ENCODE measurements at regions of chr1 and their contacts with region 1.

Region 1: DNA sequence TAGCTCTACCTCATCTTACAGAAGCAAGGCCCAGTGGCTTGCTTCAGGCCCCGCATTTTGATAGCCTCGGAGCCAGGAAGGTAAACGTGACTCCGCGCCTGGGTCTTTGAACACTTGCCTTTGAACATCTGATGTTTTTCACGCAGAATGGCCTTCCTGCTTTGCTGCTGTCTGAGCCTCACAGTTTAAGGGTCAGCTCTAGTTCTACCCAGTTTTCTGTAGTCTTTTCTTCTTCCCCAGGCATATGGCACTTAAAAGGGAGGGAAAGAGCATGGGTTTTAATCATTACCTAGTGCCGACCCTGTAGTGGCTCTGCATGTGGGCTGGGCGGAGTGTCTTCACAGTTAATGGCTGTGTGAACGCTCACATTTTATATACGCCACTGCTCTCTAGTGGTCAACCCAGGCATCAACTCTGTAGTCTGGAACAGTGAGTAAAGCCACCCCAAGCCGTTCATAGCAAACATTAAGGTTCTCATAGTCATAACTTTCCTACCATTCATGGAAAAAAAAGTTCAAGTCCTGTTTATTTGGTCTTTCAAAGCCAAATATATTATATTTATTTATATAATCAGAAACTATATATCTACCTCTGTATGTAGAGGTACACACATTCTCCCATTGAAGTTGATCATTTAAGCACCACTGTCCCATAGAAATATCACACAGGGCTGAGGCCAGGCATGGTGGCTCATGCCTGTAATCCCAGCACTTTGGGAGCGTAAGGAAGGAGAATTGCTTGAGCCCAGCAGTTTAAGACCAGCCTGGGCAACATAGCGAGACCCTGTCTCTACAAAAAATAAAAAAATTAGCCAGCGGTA is 78.1 kb downstream of the IER5 start:
- H3K4me3 Mint-ChIP-seq: no peak overlapping the region
- H3K27ac Mint-ChIP-seq: no peak overlapping the region
- H3K4me1 Mint-ChIP-seq: peaks cover 7% of the 10 kb centered on the region
- H3K27me3 Mint-ChIP-seq: peaks cover 5% of the 10 kb centered on the region

Region 2: DNA sequence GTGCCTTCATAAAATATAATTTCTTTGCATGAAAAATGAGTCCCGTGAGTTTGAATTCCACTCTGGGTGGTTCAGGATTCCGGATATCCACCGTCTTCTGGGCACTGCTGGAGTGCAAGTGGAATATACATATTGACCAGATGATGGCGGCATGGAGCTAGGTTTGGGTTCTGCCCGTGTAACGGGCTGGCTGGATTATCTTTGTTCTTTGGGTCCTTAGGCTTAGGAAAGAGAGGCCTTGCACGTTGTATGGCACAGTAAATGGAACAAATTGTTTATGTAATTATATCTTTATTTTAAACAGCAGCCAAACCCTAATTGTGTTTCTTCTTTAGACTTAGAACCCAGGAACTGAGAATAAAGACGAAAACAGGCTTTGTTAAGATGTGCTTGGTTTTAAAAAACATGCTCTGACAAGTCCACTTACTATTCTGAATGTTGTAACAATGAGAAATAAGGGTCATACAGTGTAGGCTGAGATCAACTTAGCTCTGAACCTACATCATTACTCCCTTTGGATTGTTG is 650.7 kb before region 1 on chr1:
- intact Hi-C with region 1: loop called (anchors 5 kb)
- H3K4me3 Mint-ChIP-seq: no peak overlapping the region
- H3K27ac Mint-ChIP-seq: no peak overlapping the region
- H3K4me1 Mint-ChIP-seq: no peaks in the 10 kb centered on the region
- H3K27me3 Mint-ChIP-seq: peaks cover 2% of the 10 kb centered on the region

Region 3: DNA sequence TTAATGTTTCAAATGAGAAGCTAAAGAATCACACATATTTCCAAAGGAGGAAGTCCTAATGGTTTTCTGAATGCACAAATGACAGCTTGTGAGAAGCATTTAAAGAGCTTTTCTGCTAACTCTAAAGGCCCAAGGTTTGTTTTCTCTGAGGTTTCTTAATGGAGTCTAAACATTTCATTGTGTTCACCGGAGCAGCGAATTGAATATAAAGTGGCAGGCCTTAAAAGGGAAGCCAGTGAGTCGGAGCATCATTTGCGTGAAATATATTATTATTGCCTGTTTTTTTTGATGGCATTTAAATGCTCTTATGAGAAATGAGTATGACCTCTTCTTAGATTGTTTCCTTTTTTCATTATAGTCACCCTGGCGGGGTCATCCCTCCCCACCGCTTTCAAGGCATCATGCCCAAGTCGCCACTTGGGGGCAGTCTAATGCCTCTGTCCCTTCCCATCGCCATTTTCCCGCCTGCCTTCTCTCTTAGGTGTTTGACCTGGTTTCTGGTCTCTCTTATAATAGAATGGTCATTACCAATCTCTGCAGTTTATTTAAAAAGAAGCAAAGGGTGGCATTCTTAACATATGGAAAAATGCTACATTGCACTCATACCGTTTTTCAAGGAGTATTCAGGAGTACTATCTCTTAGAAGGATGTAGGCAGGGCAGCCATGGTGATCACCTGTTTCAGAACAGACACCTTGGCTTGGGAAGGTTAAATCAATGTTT is 633.2 kb before region 1 on chr1:
- intact Hi-C with region 1: loop called (anchors 5 kb)
- H3K4me3 Mint-ChIP-seq: no peak overlapping the region
- H3K27ac Mint-ChIP-seq: no peak overlapping the region
- H3K4me1 Mint-ChIP-seq: no peaks in the 10 kb centered on the region
- H3K27me3 Mint-ChIP-seq: peaks cover 4% of the 10 kb centered on the region

Region 4: GRCh38 chr1:180881806-180882509 is 284.6 kb before region 1 on chr1:
- intact Hi-C with region 1: loop called (anchors 1 kb)
- H3K4me3 Mint-ChIP-seq: no peak overlapping the region
- H3K27ac Mint-ChIP-seq: no peak overlapping the region
- H3K4me1 Mint-ChIP-seq: no peaks in the 10 kb centered on the region
- H3K27me3 Mint-ChIP-seq: no peaks in the 10 kb centered on the region

Region 5: GRCh38 chr1:181038399-181038873 is 128.2 kb before region 1 on chr1:
- intact Hi-C with region 1: loop called (anchors 2 kb)
- H3K4me3 Mint-ChIP-seq: no peak overlapping the region
- H3K27ac Mint-ChIP-seq: peak overlapping the region; percentile 35
- H3K4me1 Mint-ChIP-seq: peaks cover 78% of the 10 kb centered on the region
- H3K27me3 Mint-ChIP-seq: no peaks in the 10 kb centered on the region